AG04449 (cell line): ENCODE measurements at regions of chr16 and their contacts with region 1.

Region 1: DNA sequence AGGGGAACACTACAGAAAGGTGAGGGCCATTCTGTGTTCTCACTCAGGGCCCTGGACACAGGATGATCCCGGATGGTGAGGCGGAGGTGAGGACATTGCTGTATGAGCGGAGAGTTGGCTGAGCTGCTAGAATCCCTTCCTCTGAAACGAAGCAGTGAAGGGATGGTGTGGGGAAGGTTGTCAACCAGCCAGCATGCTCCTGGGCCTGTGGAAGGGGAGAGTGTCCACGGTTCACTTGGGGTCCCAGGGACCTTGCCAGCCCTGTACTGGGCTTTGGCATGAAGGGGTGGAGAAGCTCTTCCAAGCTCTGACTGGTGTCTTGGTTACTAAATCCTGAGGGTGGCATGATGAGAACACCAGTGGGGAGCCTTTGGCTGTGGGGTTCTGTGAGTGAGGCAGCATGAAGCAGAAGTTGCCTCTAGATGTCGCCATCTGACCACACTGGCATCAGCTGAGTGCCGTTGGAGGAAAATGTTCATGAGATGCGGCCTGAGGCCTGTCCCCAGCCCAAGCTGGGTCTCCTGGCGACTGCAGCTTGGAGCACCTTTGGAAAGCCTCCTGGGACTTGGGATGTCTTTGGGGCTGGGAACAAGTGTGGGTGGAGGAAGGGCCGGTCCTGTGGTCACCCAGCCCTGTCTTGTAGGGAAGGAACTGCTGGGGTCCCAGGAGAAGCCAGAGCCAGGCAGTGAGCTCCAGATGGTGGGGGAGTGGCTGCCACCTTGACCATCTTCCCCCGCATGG is 14.8 kb downstream of the PDP2 start:
- DNase-seq: no peak
- H3K4me3 ChIP-seq: no peak overlapping the region
- CTCF ChIP-seq: peak; percentile 89

Region 2: GRCh38 chr16:66905633-66906539 is 10.8 kb after region 1 on chr16:
- CTCF ChIA-PET with region 1: interaction called, 66 read pairs
- POLR2A ChIA-PET with region 1: no interaction called
- DNase-seq: no peak
- H3K4me3 ChIP-seq: no peak overlapping the region
- CTCF ChIP-seq: no peak

Region 3: GRCh38 chr16:66924527-66925321 is 29.6 kb after region 1 on chr16:
- CTCF ChIA-PET with region 1: interaction called, 350 read pairs
- POLR2A ChIA-PET with region 1: interaction called, 4 read pairs
- DNase-seq: no peak
- H3K4me3 ChIP-seq: peak overlapping the region; percentile 46
- CTCF ChIP-seq: peak; percentile 27

Region 4: DNA sequence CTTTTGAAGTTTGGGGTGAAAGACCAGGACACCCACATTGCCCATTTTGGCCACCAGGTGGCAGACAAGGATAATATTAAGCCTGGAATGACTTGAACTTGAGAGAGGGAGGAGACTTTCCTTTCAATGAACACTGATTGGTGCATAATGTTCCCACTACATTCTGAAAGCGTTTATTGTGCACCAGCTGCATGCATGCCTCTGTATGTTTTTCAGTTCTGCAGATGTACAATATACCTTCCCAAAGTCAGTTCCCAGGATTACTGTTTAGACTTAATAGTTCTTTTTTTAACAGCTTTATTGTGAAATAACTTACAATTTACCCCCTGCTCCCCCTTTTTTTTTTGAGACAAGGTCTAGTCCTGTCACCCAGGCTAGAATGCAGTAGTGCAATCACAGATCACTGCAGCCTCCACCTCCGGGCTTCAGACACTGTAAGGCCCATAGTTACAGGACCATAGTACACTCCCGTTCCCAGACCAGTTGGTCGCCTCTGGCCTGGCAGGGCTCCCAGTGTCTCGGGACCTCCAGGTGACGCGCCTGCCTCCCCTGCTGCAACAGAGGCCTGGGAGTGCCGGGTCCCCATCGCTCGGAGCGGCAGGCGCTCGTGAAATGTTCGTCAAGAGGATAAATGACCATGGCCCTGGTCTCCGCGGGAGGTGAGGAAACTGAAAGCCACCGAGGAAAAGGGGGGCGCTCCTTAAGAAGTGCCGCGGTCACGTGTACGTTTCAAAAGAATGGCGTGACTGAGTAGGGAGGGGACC is 52.4 kb after region 1 on chr16:
- CTCF ChIA-PET with region 1: interaction called, 100 read pairs
- POLR2A ChIA-PET with region 1: no interaction called
- DNase-seq: no peak
- H3K4me3 ChIP-seq: peak overlapping the region; percentile 58
- CTCF ChIP-seq: peak; percentile 73

Region 5: GRCh38 chr16:66961065-66961744 is 66.1 kb after region 1 on chr16 and contains the start of gene CES3:
- CTCF ChIA-PET with region 1: interaction called, 35 read pairs
- POLR2A ChIA-PET with region 1: no interaction called
- DNase-seq: no peak
- H3K4me3 ChIP-seq: no peak within 1 kb of the TSS
- CTCF ChIP-seq: peak; percentile 84